ENCODE measurements at regions of chr3 and their contacts with region 1.

Region 1: DNA sequence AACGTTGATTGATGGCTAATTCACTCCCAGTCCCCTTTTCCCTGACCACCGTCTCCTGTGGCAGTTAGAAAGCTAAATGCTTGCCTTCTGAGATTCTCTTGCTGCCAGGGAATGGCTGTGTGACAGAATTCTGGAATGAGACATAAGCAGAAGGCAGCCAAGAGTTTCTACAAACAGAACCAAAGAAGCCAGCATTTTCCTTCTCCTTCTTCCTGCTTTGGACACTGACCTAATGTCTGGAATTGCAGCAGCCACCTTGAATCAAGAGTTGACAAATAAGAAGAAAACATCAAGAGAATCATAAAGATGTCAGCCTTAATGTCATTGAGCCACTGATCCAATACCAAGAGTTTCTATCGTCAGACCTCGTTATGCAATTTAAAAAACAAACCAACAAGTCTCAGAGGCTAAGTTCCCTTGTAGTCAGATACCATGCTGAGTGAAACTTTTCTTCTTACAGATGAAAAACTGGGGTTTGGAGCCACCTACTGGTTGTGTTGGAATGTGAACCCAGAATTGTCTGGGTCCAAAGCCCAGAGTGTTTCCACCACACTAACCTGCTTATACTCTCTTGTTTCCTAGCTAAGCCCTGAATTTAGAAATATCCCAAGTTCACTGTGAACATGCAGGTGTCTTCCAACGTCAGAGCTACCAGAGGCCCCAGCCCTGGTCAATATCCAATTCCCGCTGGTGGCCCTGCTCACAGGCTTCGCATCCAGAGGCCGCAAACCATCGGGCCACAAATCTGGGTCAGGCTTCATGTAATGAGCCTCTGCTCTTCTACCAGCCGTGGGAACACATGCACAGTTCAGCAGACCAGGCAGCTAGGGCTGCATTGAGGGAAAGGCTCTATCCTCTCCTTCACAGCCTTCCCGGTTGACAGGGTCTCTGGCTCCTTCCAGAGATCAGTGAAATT is 42.5 kb downstream of the MCF2L2 start:
- DNase-seq: no peak
- ATAC-seq: peak; percentile 84

Region 2: DNA sequence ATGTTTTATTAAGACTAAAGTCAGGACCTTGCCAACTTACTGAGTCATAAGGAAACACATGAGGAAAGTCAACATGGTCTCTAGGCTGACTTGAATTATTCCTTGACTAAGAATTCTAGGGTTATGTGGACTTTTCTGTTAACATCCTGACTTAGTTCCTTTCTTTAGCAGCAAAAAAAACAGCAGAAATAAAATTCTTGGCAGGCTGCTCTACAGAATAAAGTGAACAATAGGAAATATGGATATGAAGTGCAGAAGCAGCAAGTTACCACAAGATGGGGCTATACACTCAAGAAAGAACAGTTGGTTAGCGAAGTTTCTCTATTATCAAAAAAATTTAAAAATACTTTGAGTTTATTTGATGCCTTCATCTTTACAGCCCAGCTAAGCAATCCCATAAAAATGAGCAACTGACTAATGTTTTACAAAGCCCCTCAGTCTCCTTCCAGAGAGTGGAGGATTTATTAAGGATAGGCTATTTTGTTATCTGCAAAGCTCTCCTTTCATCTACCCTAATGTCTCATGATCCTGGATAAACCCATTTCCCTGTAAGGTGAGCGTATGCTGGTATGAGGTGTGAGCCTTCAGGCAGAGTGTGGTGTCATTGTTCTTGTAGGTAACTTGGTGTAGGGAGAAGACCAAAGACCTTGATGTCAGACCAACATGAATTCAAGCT is 263.6 kb before region 1 on chr3:
- intact Hi-C with region 1: loop called (anchors 2 kb)
- DNase-seq: no peak
- ATAC-seq: peak; percentile 62

Region 3: GRCh38 chr3:183188895-183189462 is 197.0 kb before region 1 on chr3:
- intact Hi-C with region 1: loop called (anchors 2 kb)
- DNase-seq: peak; percentile 50
- ATAC-seq: no peak

Measured in Right ventricle myocardium superior (tissue), 1 donor.